GM18951 (cell line): ENCODE measurements at regions of chr7 and their contacts with region 1.

Region 1: DNA sequence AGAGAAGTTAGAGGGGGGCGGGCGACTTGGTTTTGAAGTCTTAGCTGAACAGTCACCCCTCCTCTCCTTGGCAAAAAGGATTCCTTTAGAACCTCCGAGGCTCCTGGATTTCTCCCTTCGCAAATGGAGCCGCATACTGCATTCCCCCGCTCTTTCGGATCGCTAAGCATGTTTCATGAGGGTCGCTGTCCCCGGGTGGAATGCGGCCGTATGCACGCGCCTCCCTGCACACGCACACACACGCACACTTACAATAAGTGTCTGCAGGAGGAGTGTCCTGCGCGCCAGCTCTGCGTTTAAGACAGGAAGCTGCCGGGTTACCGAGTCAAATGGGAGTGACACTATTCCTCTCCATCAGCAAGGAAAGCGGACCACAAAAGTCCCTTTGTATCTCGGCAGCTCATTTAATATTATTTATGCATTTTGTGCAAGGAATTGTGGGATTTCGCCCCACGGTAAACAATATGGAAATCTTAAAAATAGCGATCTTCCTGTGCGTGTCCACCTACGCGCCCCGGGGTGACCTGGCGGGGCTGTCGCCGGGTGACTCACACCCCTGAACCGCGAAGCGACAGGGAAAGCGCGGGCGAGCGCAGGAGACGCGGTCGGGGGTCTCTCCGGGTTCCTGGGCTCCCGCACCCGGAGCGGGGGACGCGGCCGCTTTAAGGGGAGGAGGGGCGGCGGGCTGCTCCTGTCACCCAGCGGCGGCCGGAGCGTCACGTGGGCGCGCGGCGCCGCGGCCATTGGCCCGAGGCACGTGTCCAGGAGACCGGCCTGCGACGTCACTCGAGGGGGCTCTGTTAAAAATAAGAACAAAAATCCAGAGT is 978 bp upstream of the EN2 start:
- POLR2A ChIP-seq: no peak

Region 2: DNA sequence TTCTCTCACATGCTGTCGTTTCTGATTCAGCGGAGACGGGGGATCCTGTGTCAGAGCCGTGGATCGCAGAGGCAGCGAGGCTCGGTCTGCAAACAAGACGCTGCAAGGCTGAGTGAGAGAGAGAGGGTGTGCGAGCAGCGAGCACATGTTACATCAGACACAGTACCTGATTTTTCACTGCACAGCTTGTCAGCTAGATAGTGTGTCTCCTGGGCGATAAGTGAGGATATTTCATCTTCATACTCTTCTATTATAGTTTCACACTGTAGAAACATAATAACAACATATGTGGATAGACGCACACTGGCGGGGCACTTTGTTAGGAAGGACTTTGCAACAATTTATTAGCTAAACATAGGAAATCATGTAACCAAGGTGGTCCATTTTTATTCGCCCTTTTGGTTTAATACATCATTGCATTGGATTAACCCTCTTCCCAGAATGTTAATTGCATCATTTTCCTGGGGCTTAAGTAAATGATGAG is 49.9 kb after region 1 on chr7:
- in situ Hi-C with region 1: loop called (anchors 10 kb)
- POLR2A ChIP-seq: no peak

Region 3: DNA sequence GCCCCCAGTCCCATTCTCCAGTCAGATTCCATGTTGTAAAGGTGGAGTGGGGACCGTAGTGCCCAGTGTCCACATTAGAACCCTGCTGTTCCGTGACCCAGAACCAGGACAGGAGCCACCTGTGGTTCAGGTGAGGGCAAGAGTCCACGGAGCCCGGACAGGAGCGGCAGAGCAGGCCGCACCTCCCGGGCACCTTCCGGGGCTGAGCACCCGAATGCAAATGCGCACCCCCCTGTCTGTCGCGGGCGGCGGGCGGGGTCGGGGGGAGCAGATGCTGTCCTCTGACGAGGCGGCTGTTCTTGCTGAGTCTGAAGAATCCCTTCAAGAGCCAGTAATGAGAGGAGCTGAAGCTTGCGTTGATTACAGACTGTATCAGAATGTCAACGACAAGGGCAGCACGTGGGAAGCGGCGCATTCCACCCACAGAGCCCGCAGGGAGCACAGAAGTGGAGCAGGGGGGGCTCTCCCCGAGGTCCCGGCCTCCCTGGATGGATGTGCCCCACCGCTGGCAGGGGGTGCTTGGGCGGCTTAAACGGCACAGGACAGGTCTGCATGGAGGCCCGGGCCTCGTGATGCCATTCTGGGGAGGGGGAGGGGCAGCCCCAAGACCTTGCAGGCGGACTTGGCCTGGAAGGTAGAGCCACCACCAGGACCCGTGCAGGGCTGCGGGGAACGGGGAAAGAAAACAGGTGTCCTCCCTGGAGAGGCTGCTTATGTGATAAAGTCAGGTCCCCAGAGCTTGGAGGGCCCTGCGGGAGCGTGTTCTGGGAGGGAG is 776.2 kb after region 1 on chr7:
- in situ Hi-C with region 1: no loop called
- POLR2A ChIP-seq: no peak